ENCODE measurements at regions of chr3 and their contacts with region 1.

Region 1: GRCh38 chr3:178304758-178305467 is 231.3 kb upstream of the KCNMB2 start:
- DNase-seq: no peak
- H3K4me3 ChIP-seq: no peak overlapping the region
- H3K27ac ChIP-seq: no peak overlapping the region
- H3K4me1 ChIP-seq: peaks cover 0 to 3% of the 10 kb centered on the region in 2 donors
- H3K27me3 ChIP-seq: no peaks in the 10 kb centered on the region
- CTCF ChIP-seq: no peak

Region 2: DNA sequence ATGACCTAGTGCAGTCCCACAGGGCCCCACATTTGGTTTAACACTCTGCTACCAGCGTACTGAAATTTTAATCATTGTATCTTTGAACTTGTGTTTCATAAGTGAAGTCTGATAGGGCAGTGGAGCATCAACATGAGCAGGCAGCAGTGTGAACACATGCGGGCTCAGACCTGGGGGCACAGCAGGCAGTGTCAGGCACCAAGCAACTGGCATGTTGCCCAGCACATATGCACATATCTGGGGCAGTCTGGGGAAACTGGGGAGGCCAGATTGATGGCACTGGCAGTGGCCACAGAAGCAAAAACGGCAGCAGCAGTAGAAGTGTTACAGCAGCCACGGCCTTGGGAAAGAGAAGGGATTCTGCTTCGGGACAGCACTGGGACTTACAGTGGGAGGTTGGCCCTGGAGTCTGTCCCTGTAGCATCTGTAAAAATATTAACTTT is 122.6 kb before region 1 on chr3:
- intact Hi-C with region 1: loop called (anchors 10 kb)
- DNase-seq: no peak
- H3K4me3 ChIP-seq: no peak overlapping the region
- H3K27ac ChIP-seq: no peak overlapping the region
- H3K4me1 ChIP-seq: no peaks in the 10 kb centered on the region
- H3K27me3 ChIP-seq: no peaks in the 10 kb centered on the region
- CTCF ChIP-seq: no peak

Region 3: DNA sequence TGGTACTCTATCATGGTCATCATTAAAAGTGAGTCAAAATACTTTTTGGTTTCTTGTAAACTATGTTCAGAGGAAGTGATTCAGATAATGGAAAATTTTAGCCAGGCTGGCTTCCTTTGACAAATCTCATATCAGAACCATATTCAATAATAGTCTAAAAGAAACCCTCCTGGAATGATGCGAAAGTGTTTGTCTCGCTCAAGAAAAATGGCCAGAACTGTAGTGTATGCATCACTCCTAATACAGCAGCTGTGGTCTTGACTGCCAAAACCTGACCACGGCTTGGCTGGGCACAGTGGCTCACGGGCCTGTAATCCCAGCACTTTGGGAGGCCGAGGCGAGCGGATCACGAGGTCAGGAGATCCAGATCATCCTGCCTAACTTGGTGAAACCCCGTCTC is 195.7 kb after region 1 on chr3:
- intact Hi-C with region 1: no loop called
- DNase-seq: no peak
- H3K4me3 ChIP-seq: no peak overlapping the region
- H3K27ac ChIP-seq: no peak overlapping the region
- H3K4me1 ChIP-seq: no peaks in the 10 kb centered on the region
- H3K27me3 ChIP-seq: no peaks in the 10 kb centered on the region
- CTCF ChIP-seq: no peak